Activated CD4-positive, alpha-beta T cell treated with anti-CD3 and anti-CD28 coated beads for 36 hours (primary cell): ENCODE measurements at regions of chr10 and their contacts with region 1.

Region 1: GRCh38 chr10:124763267-124763666 is 19.1 kb upstream of the FAM53B start:
- DNase-seq: no peak
- ATAC-seq: no peak
- H3K4me3 Mint-ChIP-seq: no peak overlapping the region
- H3K27ac Mint-ChIP-seq: no peak overlapping the region
- H3K4me1 Mint-ChIP-seq: no peaks in the 10 kb centered on the region
- H3K27me3 Mint-ChIP-seq: no peaks in the 10 kb centered on the region

Region 2: GRCh38 chr10:124354411-124355382 is 408.6 kb before region 1 on chr10:
- CTCF ChIA-PET with region 1: no interaction called
- POLR2A ChIA-PET with region 1: no interaction called
- intact Hi-C with region 1: no loop called
- DNase-seq: peak; percentile 69
- ATAC-seq: peak; percentile 98
- H3K4me3 Mint-ChIP-seq: peak overlapping the region; percentile 75
- H3K27ac Mint-ChIP-seq: peak overlapping the region; percentile 88
- H3K4me1 Mint-ChIP-seq: peaks cover 13% of the 10 kb centered on the region
- H3K27me3 Mint-ChIP-seq: no peaks in the 10 kb centered on the region

Region 3: DNA sequence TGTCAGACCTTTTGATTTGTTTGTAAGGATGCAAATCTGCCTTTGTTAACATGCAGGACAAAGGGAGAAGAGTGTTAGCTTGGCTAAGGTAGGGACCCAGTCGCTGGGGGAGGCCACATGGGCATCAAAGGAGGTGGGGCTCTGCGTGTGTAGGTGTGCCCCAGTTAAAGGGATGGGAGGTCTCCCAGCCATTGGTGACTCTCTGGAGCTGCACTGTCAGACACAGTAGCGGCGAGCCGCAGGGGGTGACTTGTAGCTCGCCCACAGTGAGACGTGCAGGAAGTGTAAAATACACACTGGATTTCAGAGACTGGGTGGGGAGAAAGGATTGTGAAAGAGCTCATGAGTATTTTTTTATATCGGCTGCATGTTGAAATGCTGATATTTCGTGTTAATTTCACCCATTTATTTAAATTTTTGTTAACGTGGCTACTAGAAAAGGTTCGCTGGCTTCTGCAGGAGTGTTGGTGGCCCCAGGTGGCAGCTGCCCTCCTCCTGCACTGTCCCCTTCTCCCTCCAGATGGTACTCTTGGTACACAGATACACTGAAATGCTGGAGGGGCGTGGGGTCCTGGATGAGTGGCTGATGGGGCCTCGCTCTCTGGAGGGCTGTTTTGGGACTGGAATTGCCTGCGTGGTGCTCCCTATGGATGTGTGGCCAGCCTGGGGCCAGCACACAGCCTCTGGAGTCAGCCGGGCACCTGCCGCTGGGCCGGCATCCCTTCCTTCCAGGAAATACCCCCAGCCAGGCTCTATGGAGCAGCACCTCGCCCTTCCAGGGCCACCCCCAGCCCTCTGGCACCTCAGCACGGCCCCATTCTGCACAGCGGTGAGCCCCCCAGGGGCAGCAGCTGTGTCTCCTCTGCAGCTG is 242.5 kb before region 1 on chr10:
- CTCF ChIA-PET with region 1: no interaction called
- POLR2A ChIA-PET with region 1: no interaction called
- intact Hi-C with region 1: no loop called
- DNase-seq: no peak
- ATAC-seq: no peak
- H3K4me3 Mint-ChIP-seq: no peak overlapping the region
- H3K27ac Mint-ChIP-seq: no peak overlapping the region
- H3K4me1 Mint-ChIP-seq: no peaks in the 10 kb centered on the region
- H3K27me3 Mint-ChIP-seq: no peaks in the 10 kb centered on the region

Region 4: GRCh38 chr10:124701435-124701834 is 61.8 kb before region 1 on chr10:
- CTCF ChIA-PET with region 1: no interaction called
- POLR2A ChIA-PET with region 1: no interaction called
- intact Hi-C with region 1: no loop called
- DNase-seq: no peak
- ATAC-seq: no peak
- H3K4me3 Mint-ChIP-seq: no peak overlapping the region
- H3K27ac Mint-ChIP-seq: peak overlapping the region; percentile 93
- H3K4me1 Mint-ChIP-seq: peaks cover 97% of the 10 kb centered on the region
- H3K27me3 Mint-ChIP-seq: no peaks in the 10 kb centered on the region

Region 5: GRCh38 chr10:124732931-124733570 is 30.2 kb before region 1 on chr10:
- CTCF ChIA-PET with region 1: no interaction called
- POLR2A ChIA-PET with region 1: no interaction called
- intact Hi-C with region 1: no loop called
- DNase-seq: peak; percentile 87
- ATAC-seq: peak; percentile 71
- H3K4me3 Mint-ChIP-seq: peak overlapping the region; percentile 43
- H3K27ac Mint-ChIP-seq: peak overlapping the region; percentile 76
- H3K4me1 Mint-ChIP-seq: peaks cover 84% of the 10 kb centered on the region
- H3K27me3 Mint-ChIP-seq: no peaks in the 10 kb centered on the region

Region 6: DNA sequence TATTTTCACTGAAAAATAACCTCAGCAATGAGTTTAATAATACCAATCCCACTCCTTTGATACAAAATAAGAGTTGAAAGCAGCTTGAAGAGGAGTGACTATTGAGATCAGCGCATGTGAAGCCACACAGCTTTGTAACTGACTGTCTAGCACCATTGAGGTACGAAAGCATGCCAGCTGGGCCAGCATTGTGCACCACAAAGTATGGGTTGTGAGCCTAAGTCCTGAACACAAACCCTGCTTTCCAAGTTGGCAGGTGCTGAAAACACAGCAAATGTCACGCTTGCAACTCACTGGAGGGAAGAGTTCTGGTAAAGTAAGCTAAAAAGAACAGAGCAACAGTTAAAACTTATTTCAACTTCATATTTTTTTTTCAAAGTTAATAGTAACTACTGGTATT is 15.1 kb before region 1 on chr10:
- CTCF ChIA-PET with region 1: interaction called, 39 read pairs
- POLR2A ChIA-PET with region 1: no interaction called
- intact Hi-C with region 1: no loop called
- DNase-seq: no peak
- ATAC-seq: no peak
- H3K4me3 Mint-ChIP-seq: no peak overlapping the region
- H3K27ac Mint-ChIP-seq: no peak overlapping the region
- H3K4me1 Mint-ChIP-seq: peaks cover 25% of the 10 kb centered on the region
- H3K27me3 Mint-ChIP-seq: no peaks in the 10 kb centered on the region